Esophagus muscularis mucosa (tissue), 4 donors: ENCODE measurements at regions of chr17 and their contacts with region 1.

Region 1: GRCh38 chr17:50956750-50957523 is 90.8 kb upstream of the TOB1 start:
- DNase-seq: no peak
- H3K4me3 ChIP-seq: no peak overlapping the region
- H3K27ac ChIP-seq: peak overlapping the region; percentile 63 to 76 (median 66)
- H3K4me1 ChIP-seq: peaks cover 23 to 48% (median 42%) of the 10 kb centered on the region in 4 donors
- H3K27me3 ChIP-seq: no peaks in the 10 kb centered on the region
- CTCF ChIP-seq: peak; percentile 78 to 84 (median 80)
- EP300 ChIP-seq: no peak
- POLR2A ChIP-seq: no peak

Region 2: DNA sequence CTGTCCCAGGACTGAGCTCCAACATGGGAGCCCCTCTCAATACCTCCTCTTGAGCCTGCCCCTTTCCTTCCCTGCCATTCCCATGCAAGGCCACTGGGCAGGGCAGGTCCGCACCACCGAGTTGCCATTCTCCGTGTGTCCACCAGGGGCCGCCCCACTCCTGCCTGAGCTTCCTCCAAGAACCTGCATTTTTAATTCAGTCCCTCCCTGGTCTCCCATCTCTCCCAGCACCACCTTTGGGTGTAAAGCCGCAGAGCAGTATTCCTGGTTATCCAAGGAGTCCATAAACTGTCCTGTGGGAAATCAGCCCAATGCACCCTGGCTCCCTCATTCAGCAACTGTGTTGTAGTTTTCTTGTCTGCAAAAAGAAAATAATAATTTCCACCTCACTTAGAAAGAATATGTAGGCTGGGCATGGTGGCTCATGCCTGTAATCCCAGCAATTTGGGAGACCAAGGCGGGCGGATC is 173.7 kb before region 1 on chr17:
- intact Hi-C with region 1: loop called (anchors 5 kb)
- DNase-seq: peak; percentile 96
- H3K4me3 ChIP-seq: no peak overlapping the region
- H3K27ac ChIP-seq: no peak overlapping the region
- H3K4me1 ChIP-seq: peaks cover 11 to 36% (median 23%) of the 10 kb centered on the region in 4 donors
- H3K27me3 ChIP-seq: peaks cover 0 to 5% (median 0%) of the 10 kb centered on the region in 4 donors
- CTCF ChIP-seq: peak; percentile 95 to 100 (median 98)
- EP300 ChIP-seq: no peak
- POLR2A ChIP-seq: no peak

Region 3: DNA sequence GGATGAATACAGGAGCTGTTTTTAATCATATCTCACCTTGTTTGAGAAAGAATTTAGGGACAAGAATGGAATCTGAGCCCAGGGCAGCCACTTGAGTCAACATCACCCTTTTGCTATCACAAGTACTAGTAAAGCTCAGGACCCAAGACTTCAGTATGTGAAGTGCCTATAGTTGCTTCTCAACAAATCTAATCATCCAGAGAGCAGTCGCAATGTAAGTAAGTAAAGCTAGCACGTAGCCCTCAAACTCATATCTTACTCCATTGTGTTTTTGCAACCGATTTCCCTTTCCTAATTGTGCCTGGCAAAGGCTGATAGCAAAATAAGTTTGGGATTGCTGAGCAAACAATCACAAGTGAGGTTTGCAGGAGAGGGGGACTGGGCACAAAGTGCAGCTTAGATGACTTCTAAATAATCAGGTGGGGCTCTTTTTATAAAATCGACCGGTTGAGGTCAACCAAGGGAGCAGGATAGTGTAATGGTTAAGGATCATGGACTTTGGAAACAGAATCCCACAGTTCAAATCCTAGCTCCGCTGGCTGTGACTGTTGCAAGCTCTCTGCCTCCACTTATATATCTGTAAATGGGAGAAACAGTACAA is 103.8 kb before region 1 on chr17:
- intact Hi-C with region 1: loop called (anchors 5 kb)
- DNase-seq: peak; percentile 75
- H3K4me3 ChIP-seq: peak overlapping the region in 1 of 4 donors; percentile 44
- H3K27ac ChIP-seq: peak overlapping the region; percentile 73 to 79 (median 76)
- H3K4me1 ChIP-seq: peaks cover 9 to 19% (median 18%) of the 10 kb centered on the region in 4 donors
- H3K27me3 ChIP-seq: no peaks in the 10 kb centered on the region
- CTCF ChIP-seq: no peak
- EP300 ChIP-seq: no peak
- POLR2A ChIP-seq: no peak